GM12878 (cell line): ENCODE measurements at regions of chr16 and their contacts with region 1.

Region 1: GRCh38 chr16:569445-570254 is at the start of gene PIGQ:
- DNase-seq: no peak
- ATAC-seq: peak; percentile 72
- H3K4me3 ChIP-seq: peak within 1 kb of the TSS; percentile 96
- H3K27ac ChIP-seq: peak within 1 kb of the TSS; percentile 61
- H3K4me1 ChIP-seq: peaks cover 19% of the 10 kb centered on the region
- H3K27me3 ChIP-seq: no peaks in the 10 kb centered on the region
- CTCF ChIP-seq: no peak
- EP300 ChIP-seq: no peak
- POLR2A ChIP-seq: peak; percentile 82
- RAD21 ChIP-seq: no peak
- polyA plus RNA-seq, gene PIGQ: 1.8 TPM in 1 of 2 experiments, not detected in the other

Region 2: DNA sequence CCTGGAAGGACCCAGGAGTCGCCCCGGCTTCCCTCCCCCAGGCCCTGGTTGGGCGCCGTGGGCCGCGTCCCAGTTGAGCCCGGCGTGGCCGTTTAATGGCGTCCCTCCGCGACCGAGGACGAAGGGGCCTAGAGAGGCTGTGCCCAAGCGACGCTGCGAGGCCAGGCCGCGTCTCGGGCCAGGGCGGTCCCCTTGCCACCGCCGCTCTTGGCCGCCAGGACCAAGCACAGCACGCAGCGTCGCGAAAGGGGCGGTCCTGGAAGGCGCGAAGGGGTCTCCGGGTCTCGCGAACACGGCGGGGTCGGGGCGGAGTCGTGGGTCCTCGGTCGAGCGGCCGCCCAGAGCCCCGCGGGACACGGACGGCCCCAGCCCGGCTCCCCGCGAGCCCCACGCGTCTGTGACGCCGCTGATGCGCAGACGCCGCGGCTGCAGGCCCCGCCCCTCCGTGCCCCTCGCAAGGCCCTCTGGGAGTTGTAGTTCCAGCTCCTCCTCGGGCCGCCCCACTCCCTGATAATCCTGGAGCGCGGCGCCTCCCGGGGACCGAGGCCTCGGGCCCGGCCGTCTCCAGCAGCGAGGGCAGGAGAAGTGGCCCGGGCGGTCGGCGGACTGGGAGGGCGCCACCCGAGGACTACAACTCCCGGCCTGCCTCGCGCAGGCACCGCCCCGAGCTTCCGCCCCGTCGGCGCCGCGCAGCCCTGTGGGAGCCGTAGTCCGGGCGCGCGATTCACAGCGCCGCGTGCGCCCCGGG is 42.5 kb before region 1 on chr16 and contains the start of gene CAPN15:
- CTCF ChIA-PET with region 1: interaction called, 4 read pairs
- POLR2A ChIA-PET with region 1: interaction called, 4 read pairs
- RAD21 ChIA-PET with region 1: interaction called, 4 read pairs
- SMC1A ChIA-PET with region 1: interaction called, 3 read pairs
- in situ Hi-C with region 1: loop called (anchors 5 kb)
- intact Hi-C with region 1: loop called (anchors 5 kb)
- DNase-seq: peak; percentile 33
- ATAC-seq: peak; percentile 78
- H3K4me3 ChIP-seq: peak within 1 kb of the TSS; percentile 98
- H3K27ac ChIP-seq: peak within 1 kb of the TSS; percentile 91
- H3K4me1 ChIP-seq: peaks cover 29% of the 10 kb centered on the region
- H3K27me3 ChIP-seq: no peaks in the 10 kb centered on the region
- CTCF ChIP-seq: no peak
- EP300 ChIP-seq: no peak
- POLR2A ChIP-seq: peak; percentile 81
- RAD21 ChIP-seq: no peak
- polyA plus RNA-seq, gene CAPN15: 0.40 to 1.1 TPM

Region 3: DNA sequence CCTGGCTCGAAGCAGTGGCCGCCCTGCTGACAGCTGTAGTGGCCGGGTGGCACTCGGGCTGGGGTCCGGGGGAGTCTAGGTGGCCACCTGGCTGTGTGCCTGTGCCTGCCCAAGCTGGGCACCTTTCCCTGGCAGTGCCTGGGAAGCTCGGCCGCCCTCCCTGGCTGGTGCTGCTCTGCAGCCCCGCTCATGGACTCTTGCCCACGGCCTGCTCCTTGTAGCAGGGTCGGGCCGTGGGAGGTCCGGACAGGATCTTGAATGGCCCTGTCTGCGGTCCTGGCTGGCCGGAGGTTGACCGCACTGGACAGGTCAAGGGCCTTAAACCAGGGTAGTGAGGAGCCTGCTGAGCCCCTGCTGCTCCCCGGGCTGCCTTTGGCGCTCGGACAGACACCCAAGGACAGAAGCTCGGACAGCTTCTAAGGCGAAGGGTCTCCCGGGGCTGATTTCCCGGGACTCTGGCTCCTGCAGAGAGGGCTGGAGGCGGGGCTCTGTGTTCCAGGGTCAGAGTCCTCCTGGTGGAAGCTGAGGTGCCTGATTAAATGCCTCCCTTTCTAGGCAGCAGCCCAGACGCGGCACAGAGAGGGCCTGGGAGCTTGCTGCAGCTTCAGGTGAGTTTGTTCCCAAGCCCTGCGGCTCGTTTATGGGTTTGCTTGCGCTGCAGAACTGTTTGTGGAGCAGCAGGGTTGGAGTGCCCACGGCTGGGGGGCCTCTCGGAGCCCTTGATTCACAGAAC is 36.1 kb before region 1 on chr16:
- CTCF ChIA-PET with region 1: no interaction called
- POLR2A ChIA-PET with region 1: interaction called, 4 read pairs
- RAD21 ChIA-PET with region 1: no interaction called
- SMC1A ChIA-PET with region 1: no interaction called
- in situ Hi-C with region 1: loop called (anchors 5 kb)
- intact Hi-C with region 1: loop called (anchors 5 kb)
- DNase-seq: no peak
- ATAC-seq: no peak
- H3K4me3 ChIP-seq: no peak overlapping the region
- H3K27ac ChIP-seq: no peak overlapping the region
- H3K4me1 ChIP-seq: peaks cover 5% of the 10 kb centered on the region; the same call in 1 of the 2 replicates
- H3K27me3 ChIP-seq: no peaks in the 10 kb centered on the region
- CTCF ChIP-seq: no peak
- EP300 ChIP-seq: no peak
- POLR2A ChIP-seq: no peak
- RAD21 ChIP-seq: no peak

Region 4: GRCh38 chr16:685967-686366 is 116.3 kb after region 1 on chr16:
- CTCF ChIA-PET with region 1: no interaction called
- POLR2A ChIA-PET with region 1: no interaction called
- RAD21 ChIA-PET with region 1: no interaction called
- SMC1A ChIA-PET with region 1: no interaction called
- in situ Hi-C with region 1: no loop called
- intact Hi-C with region 1: no loop called
- DNase-seq: no peak
- ATAC-seq: no peak
- H3K4me3 ChIP-seq: no peak overlapping the region
- H3K27ac ChIP-seq: no peak overlapping the region
- H3K4me1 ChIP-seq: peaks cover 20% of the 10 kb centered on the region
- H3K27me3 ChIP-seq: no peaks in the 10 kb centered on the region
- CTCF ChIP-seq: peak; percentile 10 to 43 (median 25); a peak in 2 of 6 replicates
- EP300 ChIP-seq: no peak
- POLR2A ChIP-seq: peak; percentile 55; the same call in 1 of the 2 replicates
- RAD21 ChIP-seq: no peak